HepG2 (cell line): ENCODE measurements at regions of chr12 and their contacts with region 1.

Region 1: GRCh38 chr12:79782197-79782900 is 91.6 kb upstream of the PAWR start:
- DNase-seq: no peak
- ATAC-seq: no peak
- H3K4me3 ChIP-seq: no peak overlapping the region
- H3K27ac ChIP-seq: no peak overlapping the region
- H3K4me1 ChIP-seq: 0 out of 2 replicates have a peak, but pooled peaks cover 6% of the 10 kb centered on the region
- H3K27me3 ChIP-seq: no peaks in the 10 kb centered on the region
- CTCF ChIP-seq: no peak
- EP300 ChIP-seq: no peak
- POLR2A ChIP-seq: no peak
- RAD21 ChIP-seq: no peak

Region 2: GRCh38 chr12:79358716-79359300 is 423.5 kb before region 1 on chr12:
- CTCF ChIA-PET with region 1: no interaction called
- POLR2A ChIA-PET with region 1: no interaction called
- in situ Hi-C with region 1: no loop called
- intact Hi-C with region 1: no loop called
- DNase-seq: no peak
- ATAC-seq: no peak
- H3K4me3 ChIP-seq: no peak overlapping the region
- H3K27ac ChIP-seq: no peak overlapping the region
- H3K4me1 ChIP-seq: no peaks in the 10 kb centered on the region
- H3K27me3 ChIP-seq: no peaks in the 10 kb centered on the region
- CTCF ChIP-seq: no peak
- EP300 ChIP-seq: no peak
- POLR2A ChIP-seq: no peak
- RAD21 ChIP-seq: no peak

Region 3: GRCh38 chr12:80186727-80187217 is 404.4 kb after region 1 on chr12:
- CTCF ChIA-PET with region 1: no interaction called
- POLR2A ChIA-PET with region 1: no interaction called
- in situ Hi-C with region 1: loop called (anchors 25 kb)
- intact Hi-C with region 1: no loop called
- DNase-seq: peak; percentile 82
- ATAC-seq: peak; percentile 95
- H3K4me3 ChIP-seq: no peak overlapping the region
- H3K27ac ChIP-seq: no peak overlapping the region
- H3K4me1 ChIP-seq: peaks cover 4% of the 10 kb centered on the region; the same call in 1 of the 2 replicates
- H3K27me3 ChIP-seq: no peaks in the 10 kb centered on the region
- CTCF ChIP-seq: peak; percentile 85
- EP300 ChIP-seq: no peak
- POLR2A ChIP-seq: no peak
- RAD21 ChIP-seq: peak; percentile 61; the same call in 1 of the 2 replicates